AG04450 (cell line): ENCODE measurements at regions of chr10 and their contacts with region 1.

Region 1: DNA sequence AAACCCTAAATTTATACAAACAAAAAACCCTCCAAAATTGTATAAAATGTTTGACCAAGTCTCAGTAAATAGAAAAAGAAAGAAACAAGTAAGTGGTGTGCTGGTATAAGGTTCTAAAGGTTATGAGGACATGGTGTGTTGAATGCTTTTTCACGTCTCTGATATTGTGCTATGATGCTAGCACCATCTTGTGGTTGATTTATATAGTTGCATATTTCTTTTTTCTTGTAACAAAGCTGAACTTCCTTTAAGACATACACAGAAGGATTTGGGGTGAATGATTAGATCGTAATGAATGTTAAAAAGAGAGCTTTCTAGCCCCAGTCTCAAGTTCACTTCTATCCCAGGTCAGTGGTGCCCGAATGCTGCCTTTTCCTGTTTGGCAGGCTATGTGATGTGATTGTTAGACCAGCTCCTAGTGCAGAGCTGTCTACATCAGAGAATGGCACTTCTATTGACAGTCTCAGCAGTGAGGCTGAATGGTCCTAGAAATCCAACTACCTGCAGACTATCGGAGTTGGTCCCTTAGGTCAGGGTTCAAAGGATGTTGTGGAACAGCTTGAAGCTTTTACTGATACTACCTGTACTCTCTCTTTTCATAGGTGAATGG is 25.0 kb downstream of the VTI1A start:
- DNase-seq: peak; percentile 23
- H3K4me3 ChIP-seq: no peak overlapping the region
- H3K27ac ChIP-seq: no peak overlapping the region
- H3K27me3 ChIP-seq: no peaks in the 10 kb centered on the region
- CTCF ChIP-seq: peak; percentile 66

Region 2: DNA sequence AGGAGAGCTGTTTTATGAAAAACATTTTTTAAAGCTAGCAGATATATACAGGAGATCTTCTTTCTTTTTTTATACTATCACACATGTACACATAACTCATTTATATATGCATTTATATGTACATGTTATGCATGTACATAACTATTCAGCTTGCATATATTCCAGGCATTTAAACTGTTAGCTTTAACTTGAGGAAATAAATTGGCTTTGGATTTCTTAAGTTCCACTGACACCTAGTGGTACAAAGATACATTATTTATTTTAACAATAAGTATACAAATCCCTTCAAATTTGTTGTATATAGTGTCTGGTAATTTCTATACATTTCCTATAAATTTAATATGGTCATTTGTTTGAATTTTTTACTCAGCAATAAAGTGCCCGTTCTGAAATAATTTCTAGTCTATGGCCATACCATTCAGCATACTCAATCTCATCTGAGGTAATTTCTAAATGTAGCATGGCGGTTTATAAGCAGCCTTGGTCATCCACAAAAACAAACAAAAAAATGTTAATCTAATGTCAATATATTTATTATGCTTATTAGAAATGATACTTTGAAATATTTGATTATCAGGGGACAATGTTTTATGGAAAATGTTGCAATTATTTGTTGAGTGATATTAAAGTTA is 36.9 kb before region 1 on chr10:
- CTCF ChIA-PET with region 1: interaction called, 20 read pairs
- POLR2A ChIA-PET with region 1: no interaction called
- DNase-seq: no peak
- H3K4me3 ChIP-seq: no peak overlapping the region
- H3K27ac ChIP-seq: no peak overlapping the region
- H3K27me3 ChIP-seq: no peaks in the 10 kb centered on the region
- CTCF ChIP-seq: peak; percentile 47

Region 3: GRCh38 chr10:112446855-112447711 is 24.9 kb before region 1 on chr10 and contains the starts of genes VTI1A and ZDHHC6:
- CTCF ChIA-PET with region 1: interaction called, 18 read pairs
- POLR2A ChIA-PET with region 1: interaction called, 3 read pairs
- DNase-seq: peak; percentile 61
- H3K4me3 ChIP-seq: peak within 1 kb of the TSS; percentile 99
- H3K27ac ChIP-seq: peak within 1 kb of the TSS; percentile 92
- H3K27me3 ChIP-seq: no peaks in the 10 kb centered on the region
- CTCF ChIP-seq: peak; percentile 43
- polyA plus RNA-seq, gene VTI1A: 17.1 and 20.4 TPM in 2 replicates
- polyA plus RNA-seq, gene ZDHHC6: 26.2 and 37.5 TPM in 2 replicates

Region 4: GRCh38 chr10:112461029-112461887 is 10.7 kb before region 1 on chr10:
- CTCF ChIA-PET with region 1: interaction called, 32 read pairs
- POLR2A ChIA-PET with region 1: no interaction called
- DNase-seq: peak; percentile 24
- H3K4me3 ChIP-seq: no peak overlapping the region
- H3K27ac ChIP-seq: peak overlapping the region; percentile 57
- H3K27me3 ChIP-seq: no peaks in the 10 kb centered on the region
- CTCF ChIP-seq: no peak

Region 5: DNA sequence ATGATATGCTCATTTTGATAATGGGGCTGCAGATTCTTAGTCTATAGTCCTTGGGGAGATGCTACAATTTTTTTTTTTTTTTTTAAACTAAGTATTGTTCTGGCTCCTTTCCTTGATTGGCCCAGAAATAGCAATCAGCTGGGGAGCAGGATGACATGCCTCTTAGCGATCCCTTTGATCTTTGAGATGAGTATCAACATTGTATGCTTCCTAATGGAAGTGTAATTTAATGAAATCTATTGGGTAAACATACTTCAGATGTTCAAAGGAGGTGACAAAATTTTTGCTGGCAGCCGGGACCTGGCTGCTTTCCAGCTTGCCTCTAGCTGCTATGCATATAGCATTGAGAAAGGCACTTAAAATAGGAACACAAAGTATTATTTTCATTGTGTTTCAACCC is 18.6 kb after region 1 on chr10:
- CTCF ChIA-PET with region 1: interaction called, 22 read pairs
- POLR2A ChIA-PET with region 1: no interaction called
- DNase-seq: no peak
- H3K4me3 ChIP-seq: no peak overlapping the region
- H3K27ac ChIP-seq: no peak overlapping the region
- H3K27me3 ChIP-seq: no peaks in the 10 kb centered on the region
- CTCF ChIP-seq: no peak

Region 6: DNA sequence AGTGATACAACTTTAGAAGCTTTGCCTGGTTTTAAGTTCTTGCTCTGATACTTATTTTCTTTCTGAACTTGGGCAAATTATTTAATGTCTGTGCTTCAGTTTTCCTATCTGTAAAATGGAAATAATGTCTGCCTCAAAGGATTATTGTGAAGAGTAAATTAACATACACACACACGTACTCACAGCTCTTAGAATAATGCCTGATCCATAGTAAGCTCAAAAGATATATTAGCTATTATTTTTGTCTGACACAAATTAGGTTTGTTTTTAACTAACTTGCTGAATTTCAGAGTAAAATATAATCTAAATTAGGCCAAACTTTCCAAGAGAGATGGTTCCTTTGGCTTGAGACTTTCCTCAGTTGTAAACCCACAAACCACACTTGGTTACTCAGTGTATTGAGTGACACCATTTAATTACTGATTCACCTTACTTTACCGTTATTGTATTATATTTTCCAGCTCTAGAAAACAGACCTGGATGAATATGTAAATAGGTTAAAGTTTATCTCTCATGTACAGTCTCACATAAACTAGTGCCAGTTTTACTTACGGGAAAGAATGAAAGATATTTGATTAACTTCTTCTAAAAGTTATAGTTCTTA is 25.5 kb after region 1 on chr10:
- CTCF ChIA-PET with region 1: interaction called, 18 read pairs
- POLR2A ChIA-PET with region 1: no interaction called
- DNase-seq: no peak
- H3K4me3 ChIP-seq: no peak overlapping the region
- H3K27ac ChIP-seq: no peak overlapping the region
- H3K27me3 ChIP-seq: no peaks in the 10 kb centered on the region
- CTCF ChIP-seq: no peak

Region 7: GRCh38 chr10:112507046-112507445 is 35.1 kb after region 1 on chr10:
- CTCF ChIA-PET with region 1: interaction called, 11 read pairs
- POLR2A ChIA-PET with region 1: no interaction called
- DNase-seq: no peak
- H3K4me3 ChIP-seq: no peak overlapping the region
- H3K27ac ChIP-seq: no peak overlapping the region
- H3K27me3 ChIP-seq: no peaks in the 10 kb centered on the region
- CTCF ChIP-seq: no peak